ENCODE measurements at regions of chr11 and their contacts with region 1.

Region 1: GRCh38 chr11:102293873-102294601 is 23.2 kb upstream of the BIRC3 start:
- DNase-seq: peak; percentile 57 to 74 (median 71)
- H3K4me3 ChIP-seq: peak overlapping the region in 1 of 2 donors; percentile 52
- H3K4me3 Mint-ChIP-seq: peak overlapping the region; percentile 86 to 99 (median 96)
- H3K27ac ChIP-seq: peak overlapping the region; percentile 62
- H3K27ac Mint-ChIP-seq: peak overlapping the region; percentile 78 to 99 (median 97)
- H3K4me1 ChIP-seq: peaks cover 34% of the 10 kb centered on the region
- H3K4me1 Mint-ChIP-seq: peaks cover 20 to 58% (median 36%) of the 10 kb centered on the region in 4 donors
- H3K27me3 ChIP-seq: no peaks in the 10 kb centered on the region
- H3K27me3 Mint-ChIP-seq: no peaks in the 10 kb centered on the region

Region 2: DNA sequence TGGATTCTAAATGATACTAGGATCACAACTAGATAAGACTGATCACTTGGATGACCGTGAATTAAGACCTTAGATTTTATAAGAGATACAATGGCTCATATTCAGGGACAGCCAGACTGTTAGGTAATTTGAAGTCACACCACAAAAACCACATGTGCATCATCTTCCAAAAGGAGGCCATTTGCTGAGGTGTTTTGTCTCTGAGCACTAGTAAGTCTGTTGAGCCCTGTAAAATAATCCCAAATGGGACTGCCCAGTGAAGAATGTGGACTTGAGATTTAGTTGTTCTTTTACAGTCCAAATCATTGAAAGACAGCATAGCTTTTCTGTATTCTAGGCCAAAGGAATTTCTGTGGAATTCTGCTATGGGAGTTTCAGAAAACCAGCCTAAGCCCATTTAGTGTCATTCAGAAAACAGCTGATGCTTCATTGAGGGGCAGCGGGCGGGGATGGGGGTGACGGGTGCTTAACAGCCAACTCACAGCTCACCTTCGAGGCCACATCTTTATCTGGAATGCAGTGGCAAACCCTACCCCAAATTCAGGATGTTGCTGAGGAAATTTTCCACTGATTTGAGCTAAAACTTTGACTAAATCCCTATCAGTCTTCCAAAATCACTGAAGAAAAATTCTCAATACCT is 56.8 kb before region 1 on chr11:
- CTCF ChIA-PET with region 1: no interaction called
- POLR2A ChIA-PET with region 1: no interaction called
- intact Hi-C with region 1: no loop called
- DNase-seq: no peak
- H3K4me3 ChIP-seq: no peak overlapping the region
- H3K4me3 Mint-ChIP-seq: no peak overlapping the region
- H3K27ac ChIP-seq: no peak overlapping the region
- H3K27ac Mint-ChIP-seq: no peak overlapping the region
- H3K4me1 ChIP-seq: no peaks in the 10 kb centered on the region
- H3K4me1 Mint-ChIP-seq: peaks cover 0 to 1% (median 0%) of the 10 kb centered on the region in 4 donors
- H3K27me3 ChIP-seq: no peaks in the 10 kb centered on the region
- H3K27me3 Mint-ChIP-seq: peaks cover 24 to 31% of the 10 kb centered on the region in 2 donors

Region 3: GRCh38 chr11:102306048-102306585 is 12.1 kb after region 1 on chr11:
- CTCF ChIA-PET with region 1: interaction called, 654 read pairs
- POLR2A ChIA-PET with region 1: interaction called, 103 read pairs
- intact Hi-C with region 1: loop called (anchors 1 kb)
- DNase-seq: peak in 3 of 5 donors; percentile 35 to 74 (median 40)
- H3K4me3 ChIP-seq: peak overlapping the region; percentile 3 to 14
- H3K4me3 Mint-ChIP-seq: peak overlapping the region; percentile 51 to 77 (median 69)
- H3K27ac ChIP-seq: peak overlapping the region; percentile 60
- H3K27ac Mint-ChIP-seq: peak overlapping the region; percentile 84 to 98 (median 94)
- H3K4me1 ChIP-seq: peaks cover 87% of the 10 kb centered on the region
- H3K4me1 Mint-ChIP-seq: peaks cover 54 to 85% (median 73%) of the 10 kb centered on the region in 4 donors
- H3K27me3 ChIP-seq: no peaks in the 10 kb centered on the region
- H3K27me3 Mint-ChIP-seq: no peaks in the 10 kb centered on the region

Region 4: GRCh38 chr11:102323542-102324251 is 29.7 kb after region 1 on chr11:
- CTCF ChIA-PET with region 1: interaction called, 654 read pairs
- POLR2A ChIA-PET with region 1: interaction called, 109 read pairs
- intact Hi-C with region 1: loop called (anchors 1 kb)
- DNase-seq: no peak
- H3K4me3 ChIP-seq: peak overlapping the region in 1 of 2 donors; percentile 2
- H3K4me3 Mint-ChIP-seq: peak overlapping the region in 3 of 8 donors; percentile 9 to 59 (median 29)
- H3K27ac ChIP-seq: no peak overlapping the region
- H3K27ac Mint-ChIP-seq: peak overlapping the region in 5 of 7 donors; percentile 30 to 81 (median 57)
- H3K4me1 ChIP-seq: peaks cover 75% of the 10 kb centered on the region
- H3K4me1 Mint-ChIP-seq: peaks cover 37 to 72% (median 49%) of the 10 kb centered on the region in 4 donors
- H3K27me3 ChIP-seq: no peaks in the 10 kb centered on the region
- H3K27me3 Mint-ChIP-seq: no peaks in the 10 kb centered on the region

Region 5: GRCh38 chr11:102346748-102347461 is 52.9 kb after region 1 on chr11 and contains the start of gene BIRC2:
- CTCF ChIA-PET with region 1: interaction called, 89 read pairs
- POLR2A ChIA-PET with region 1: interaction called, 16 read pairs
- intact Hi-C with region 1: loop called (anchors 1 kb)
- DNase-seq: peak; percentile 92 to 97 (median 95)
- H3K4me3 ChIP-seq: peak within 1 kb of the TSS; percentile 81 to 98
- H3K4me3 Mint-ChIP-seq: peak within 1 kb of the TSS; percentile 89 to 100 (median 97)
- H3K27ac ChIP-seq: peak within 1 kb of the TSS; percentile 94
- H3K27ac Mint-ChIP-seq: peak within 1 kb of the TSS; percentile 98 to 100 (median 99)
- H3K4me1 ChIP-seq: peaks cover 30% of the 10 kb centered on the region
- H3K4me1 Mint-ChIP-seq: peaks cover 24 to 56% (median 32%) of the 10 kb centered on the region in 4 donors
- H3K27me3 ChIP-seq: no peaks in the 10 kb centered on the region
- H3K27me3 Mint-ChIP-seq: peaks cover 0 to 1% of the 10 kb centered on the region in 2 donors
- total RNA-seq, gene BIRC2: 60.9 to 61.2 TPM

Region 6: DNA sequence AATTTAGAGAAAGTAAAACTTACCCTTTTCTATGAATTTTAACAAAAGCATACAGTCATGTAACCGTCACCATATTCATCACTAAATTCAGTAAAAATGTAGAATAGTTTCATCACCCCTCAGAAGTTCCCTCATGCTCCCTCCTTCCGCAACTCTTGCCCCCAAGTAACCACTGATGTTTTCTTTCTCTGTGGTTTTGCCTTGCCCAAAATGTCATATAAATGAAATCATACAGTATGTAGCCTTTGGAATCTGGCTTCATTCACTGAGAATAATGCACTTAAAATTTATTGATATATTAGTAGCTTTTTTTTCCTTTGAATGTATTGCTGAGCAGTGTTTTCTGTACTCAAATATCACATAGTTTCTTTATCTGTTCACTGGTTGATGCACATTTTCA is 737.8 kb after region 1 on chr11:
- CTCF ChIA-PET with region 1: no interaction called
- POLR2A ChIA-PET with region 1: no interaction called
- intact Hi-C with region 1: no loop called
- DNase-seq: no peak
- H3K4me3 ChIP-seq: no peak overlapping the region
- H3K4me3 Mint-ChIP-seq: no peak overlapping the region
- H3K27ac ChIP-seq: no peak overlapping the region
- H3K27ac Mint-ChIP-seq: no peak overlapping the region
- H3K4me1 ChIP-seq: peaks cover 8% of the 10 kb centered on the region
- H3K4me1 Mint-ChIP-seq: peaks cover 6 to 8% (median 6%) of the 10 kb centered on the region in 4 donors
- H3K27me3 ChIP-seq: no peaks in the 10 kb centered on the region
- H3K27me3 Mint-ChIP-seq: peaks cover 2 to 4% of the 10 kb centered on the region in 2 donors